Activated CD4-positive, alpha-beta T cell treated with anti-CD3 and anti-CD28 coated beads for 36 hours (primary cell): ENCODE measurements at regions of chr5 and their contacts with region 1.

Region 1: DNA sequence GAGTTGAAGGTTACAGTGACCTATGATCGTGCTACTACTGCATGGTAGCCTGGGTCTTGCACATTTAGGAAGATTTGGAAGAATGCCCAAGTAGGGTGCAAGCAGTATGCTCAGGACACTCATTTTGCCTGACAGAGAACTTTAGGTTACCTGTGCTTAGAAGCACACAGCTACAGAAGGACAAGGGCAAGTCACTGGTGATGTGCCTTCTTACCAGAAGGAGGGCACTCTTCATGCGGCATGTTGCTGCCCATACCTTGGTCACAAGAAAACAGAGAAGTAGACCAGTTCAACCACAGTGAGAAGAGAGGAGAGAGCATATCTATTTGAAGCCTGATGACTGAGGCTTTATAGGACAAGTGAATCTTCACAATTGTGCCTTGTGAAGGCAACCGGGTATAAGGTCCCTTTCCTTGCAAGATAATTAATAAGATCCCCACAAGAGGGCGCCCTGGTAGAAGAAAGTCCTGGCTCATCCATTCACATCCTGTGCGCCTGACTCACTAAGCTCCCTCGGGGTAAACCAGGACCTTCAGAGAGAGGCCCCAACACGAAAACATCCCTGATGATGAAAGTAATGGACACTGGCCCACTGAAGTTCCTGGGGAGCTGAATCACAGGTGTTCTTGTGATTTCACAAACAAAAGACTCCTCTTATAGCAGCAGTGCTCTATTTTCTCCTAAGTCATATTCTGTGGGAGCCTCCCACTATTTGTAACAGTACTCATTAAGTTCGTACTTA is 38.1 kb upstream of the STARD4 start:
- DNase-seq: peak; percentile 86
- ATAC-seq: peak; percentile 90
- H3K4me3 Mint-ChIP-seq: no peak overlapping the region
- H3K27ac Mint-ChIP-seq: peak overlapping the region; percentile 67
- H3K4me1 Mint-ChIP-seq: peaks cover 36% of the 10 kb centered on the region
- H3K27me3 Mint-ChIP-seq: no peaks in the 10 kb centered on the region

Region 2: GRCh38 chr5:111512375-111513130 is 37.9 kb before region 1 on chr5 and contains the start of gene STARD4:
- CTCF ChIA-PET with region 1: interaction called, 10 read pairs
- POLR2A ChIA-PET with region 1: no interaction called
- intact Hi-C with region 1: no loop called
- DNase-seq: peak; percentile 97
- ATAC-seq: peak; percentile 94
- H3K4me3 Mint-ChIP-seq: peak within 1 kb of the TSS; percentile 99
- H3K27ac Mint-ChIP-seq: peak within 1 kb of the TSS; percentile 96
- H3K4me1 Mint-ChIP-seq: peaks cover 42% of the 10 kb centered on the region
- H3K27me3 Mint-ChIP-seq: no peaks in the 10 kb centered on the region
- total RNA-seq, gene STARD4: 54.2 to 55.3 TPM

Region 3: DNA sequence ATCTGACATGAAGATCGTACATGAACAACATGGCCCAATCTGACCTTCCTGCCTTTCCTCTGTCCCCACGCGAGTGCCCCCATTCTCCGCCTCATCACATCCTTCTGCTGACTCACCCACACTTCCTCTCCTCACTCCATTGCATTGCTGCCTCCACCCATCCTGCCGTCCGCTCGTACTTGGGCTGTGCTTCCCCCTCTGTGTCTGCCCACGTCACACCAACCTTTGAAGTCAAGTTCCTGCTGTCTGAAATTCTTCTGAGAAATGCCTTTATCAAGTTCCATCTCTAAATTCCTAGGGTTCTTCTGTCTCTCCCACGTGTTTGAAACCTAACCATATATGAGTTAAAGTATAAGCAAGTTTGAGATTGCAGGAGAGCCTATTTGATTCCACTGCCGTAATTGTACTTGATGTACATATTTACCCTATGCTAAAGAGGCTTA is 20.1 kb before region 1 on chr5:
- CTCF ChIA-PET with region 1: interaction called, 12 read pairs
- POLR2A ChIA-PET with region 1: interaction called, 3 read pairs
- intact Hi-C with region 1: no loop called
- DNase-seq: peak; percentile 87
- ATAC-seq: peak; percentile 100
- H3K4me3 Mint-ChIP-seq: peak overlapping the region; percentile 50
- H3K27ac Mint-ChIP-seq: peak overlapping the region; percentile 84
- H3K4me1 Mint-ChIP-seq: peaks cover 19% of the 10 kb centered on the region
- H3K27me3 Mint-ChIP-seq: no peaks in the 10 kb centered on the region

Region 4: GRCh38 chr5:111628901-111629300 is 78.5 kb after region 1 on chr5:
- CTCF ChIA-PET with region 1: interaction called, 3 read pairs
- POLR2A ChIA-PET with region 1: no interaction called
- intact Hi-C with region 1: loop called (anchors 1 to 2 kb)
- DNase-seq: no peak
- ATAC-seq: no peak
- H3K4me3 Mint-ChIP-seq: no peak overlapping the region
- H3K27ac Mint-ChIP-seq: no peak overlapping the region
- H3K4me1 Mint-ChIP-seq: peaks cover 17% of the 10 kb centered on the region
- H3K27me3 Mint-ChIP-seq: peaks cover 5% of the 10 kb centered on the region

Region 5: DNA sequence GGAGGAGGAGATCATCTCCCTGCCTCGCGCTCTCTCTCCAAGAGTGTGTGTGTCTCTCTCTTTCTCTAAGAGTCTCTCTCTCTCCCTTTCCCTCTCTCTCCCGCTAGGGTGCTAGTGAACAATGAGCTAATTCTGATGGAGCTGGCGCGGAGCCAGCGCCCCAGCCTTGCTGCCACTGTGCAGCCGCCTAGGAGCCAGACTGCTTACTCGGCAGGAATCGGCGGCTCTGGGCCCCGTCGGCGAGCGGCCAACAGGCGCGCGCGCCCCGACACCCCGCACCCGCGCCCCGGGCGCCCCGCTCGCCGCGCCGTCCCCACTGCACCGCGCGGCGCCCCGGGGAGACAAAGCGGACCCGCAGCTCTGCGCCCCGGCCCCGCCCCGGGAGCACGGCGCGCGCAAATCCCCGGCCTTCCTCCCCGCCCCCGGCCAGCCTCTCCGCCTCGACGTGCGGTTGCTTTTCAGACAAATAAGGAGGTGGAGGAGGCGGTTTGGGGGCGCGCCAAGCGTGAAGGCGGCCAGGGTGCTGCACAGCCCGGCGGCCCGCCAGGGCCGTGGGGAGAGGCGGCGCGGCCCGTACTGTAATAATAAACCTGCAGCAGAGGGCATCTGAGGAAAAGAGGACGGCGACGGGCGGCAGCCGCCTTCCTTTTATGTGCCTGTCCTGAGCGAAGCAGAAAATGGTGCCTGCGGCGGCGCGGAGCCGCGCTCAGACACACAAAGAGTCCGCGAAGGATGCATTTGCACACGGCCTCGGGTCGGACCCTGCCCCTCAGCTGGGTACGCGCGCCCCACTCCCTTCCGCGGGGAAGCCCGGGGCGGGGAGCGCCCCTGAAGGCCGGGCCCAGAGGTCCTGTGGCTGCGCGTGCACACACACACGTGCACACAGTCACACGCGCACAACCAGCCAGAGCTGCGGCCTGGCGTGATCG is 207.2 kb after region 1 on chr5:
- CTCF ChIA-PET with region 1: no interaction called
- POLR2A ChIA-PET with region 1: no interaction called
- intact Hi-C with region 1: loop called (anchors 1 to 5 kb)
- DNase-seq: peak; percentile 91
- ATAC-seq: peak; percentile 78
- H3K4me3 Mint-ChIP-seq: peak overlapping the region; percentile 80
- H3K27ac Mint-ChIP-seq: peak overlapping the region; percentile 86
- H3K4me1 Mint-ChIP-seq: peaks cover 18% of the 10 kb centered on the region
- H3K27me3 Mint-ChIP-seq: peaks cover 3% of the 10 kb centered on the region

Region 6: GRCh38 chr5:111834926-111835598 is 284.6 kb after region 1 on chr5:
- CTCF ChIA-PET with region 1: no interaction called
- POLR2A ChIA-PET with region 1: no interaction called
- intact Hi-C with region 1: loop called in 1 of 2 experiments (anchors 5 kb)
- DNase-seq: no peak
- ATAC-seq: no peak
- H3K4me3 Mint-ChIP-seq: no peak overlapping the region
- H3K27ac Mint-ChIP-seq: no peak overlapping the region
- H3K4me1 Mint-ChIP-seq: no peaks in the 10 kb centered on the region
- H3K27me3 Mint-ChIP-seq: no peaks in the 10 kb centered on the region

Region 7: GRCh38 chr5:112154940-112155686 is 604.7 kb after region 1 on chr5:
- CTCF ChIA-PET with region 1: interaction called, 7 read pairs
- POLR2A ChIA-PET with region 1: no interaction called
- intact Hi-C with region 1: loop called in 1 of 2 experiments (anchors 2 kb)
- DNase-seq: no peak
- ATAC-seq: peak; percentile 84
- H3K4me3 Mint-ChIP-seq: no peak overlapping the region
- H3K27ac Mint-ChIP-seq: peak overlapping the region; percentile 40
- H3K4me1 Mint-ChIP-seq: peaks cover 26% of the 10 kb centered on the region
- H3K27me3 Mint-ChIP-seq: no peaks in the 10 kb centered on the region

Region 8: DNA sequence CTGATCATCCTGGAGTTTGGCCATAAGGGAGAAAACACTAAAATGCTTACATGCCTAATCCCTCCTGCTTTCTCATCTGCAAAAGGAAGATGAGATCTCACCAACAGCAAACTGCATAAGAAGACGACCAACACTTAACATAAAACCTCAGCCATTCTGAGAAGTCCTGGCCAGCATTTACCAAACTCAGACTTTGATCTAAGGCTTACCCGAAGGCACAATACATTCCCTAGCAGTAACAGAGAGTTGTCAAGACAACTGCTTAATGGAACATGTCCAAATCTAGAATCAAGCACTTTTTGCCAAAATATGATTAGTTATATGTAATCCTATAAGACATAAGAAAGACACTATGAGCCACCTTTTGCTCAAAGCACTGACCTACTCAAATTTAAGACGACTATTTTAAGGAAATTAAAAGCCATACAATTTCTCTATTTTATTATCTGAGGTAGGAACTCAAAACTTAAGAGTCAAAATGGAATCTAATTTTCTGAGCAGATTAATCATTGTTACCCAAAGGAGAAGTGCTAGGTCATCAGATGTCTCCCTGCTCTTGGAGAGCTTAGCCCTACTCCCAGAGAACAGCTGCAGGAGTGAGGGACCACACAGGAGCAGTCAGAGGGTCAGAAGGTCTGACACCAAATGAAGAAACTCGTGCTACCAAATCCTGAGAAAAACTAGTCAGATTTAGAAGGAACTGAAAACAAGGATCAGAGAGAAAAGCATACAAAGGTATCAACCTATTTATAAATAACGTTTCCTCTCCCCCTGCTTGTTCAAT is 829.3 kb after region 1 on chr5:
- CTCF ChIA-PET with region 1: no interaction called
- POLR2A ChIA-PET with region 1: no interaction called
- intact Hi-C with region 1: no loop called
- DNase-seq: no peak
- ATAC-seq: no peak
- H3K4me3 Mint-ChIP-seq: no peak overlapping the region
- H3K27ac Mint-ChIP-seq: no peak overlapping the region
- H3K4me1 Mint-ChIP-seq: no peaks in the 10 kb centered on the region
- H3K27me3 Mint-ChIP-seq: peaks cover 11% of the 10 kb centered on the region